ENCODE measurements at regions of chr3 and their contacts with region 1.

Region 1: GRCh38 chr3:98817547-98818041 is 54.5 kb downstream of the ST3GAL6 start:
- DNase-seq: peak in 1 of 2 experiments; percentile 64
- H3K4me3 ChIP-seq: no peak overlapping the region
- H3K27ac ChIP-seq: peak overlapping the region; percentile 2; the same call in 1 of the 2 replicates
- H3K4me1 ChIP-seq: peaks cover 24% of the 10 kb centered on the region
- H3K27me3 ChIP-seq: no peaks in the 10 kb centered on the region
- CTCF ChIP-seq: peak; percentile 95

Region 2: DNA sequence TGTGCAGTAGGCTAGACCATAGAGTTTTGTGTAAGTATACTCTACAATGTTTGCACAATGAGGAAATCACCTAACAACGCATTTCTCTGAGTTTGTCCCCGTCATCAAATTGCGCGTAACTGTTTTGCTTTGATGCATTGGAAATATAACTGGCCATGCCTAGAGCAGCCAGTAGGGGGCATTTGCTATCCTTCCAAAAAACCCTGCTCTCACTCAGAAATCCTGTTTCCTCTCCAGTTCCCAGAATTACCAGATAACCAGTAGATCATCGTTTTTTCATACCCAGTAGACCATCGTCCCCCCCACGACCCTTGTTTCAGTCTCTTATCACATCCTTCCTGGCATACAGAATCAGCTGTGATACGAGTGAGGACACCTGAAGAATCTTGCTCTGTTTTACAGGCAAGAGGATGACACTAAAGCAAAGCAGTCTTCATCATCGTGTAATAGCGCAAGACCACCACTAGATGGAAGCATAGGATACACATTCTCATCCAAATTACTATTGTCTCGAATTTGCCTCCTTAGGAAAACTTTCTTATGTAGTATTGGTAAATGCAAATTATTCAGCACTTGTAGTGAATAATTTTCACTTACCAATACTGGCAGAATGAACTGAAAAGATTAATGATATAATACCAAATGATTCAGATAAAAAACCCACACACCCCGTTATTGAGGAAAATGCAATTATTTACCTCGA is 778.1 kb before region 1 on chr3:
- CTCF ChIA-PET with region 1: no interaction called
- POLR2A ChIA-PET with region 1: no interaction called
- intact Hi-C with region 1: loop called (anchors 1 kb)
- DNase-seq: peak; percentile 74 to 81
- H3K4me3 ChIP-seq: peak overlapping the region; percentile 50; the same call in 1 of the 2 replicates
- H3K27ac ChIP-seq: no peak overlapping the region
- H3K4me1 ChIP-seq: peaks cover 9% of the 10 kb centered on the region; the same call in 1 of the 2 replicates
- H3K27me3 ChIP-seq: no peaks in the 10 kb centered on the region
- CTCF ChIP-seq: peak; percentile 100

Region 3: GRCh38 chr3:98602078-98602678 is 215.4 kb before region 1 on chr3:
- CTCF ChIA-PET with region 1: interaction called, 10 read pairs
- POLR2A ChIA-PET with region 1: interaction called, 4 read pairs
- intact Hi-C with region 1: loop called (anchors 1 kb)
- DNase-seq: peak; percentile 29 to 61
- H3K4me3 ChIP-seq: no peak overlapping the region
- H3K27ac ChIP-seq: no peak overlapping the region
- H3K4me1 ChIP-seq: no peaks in the 10 kb centered on the region
- H3K27me3 ChIP-seq: no peaks in the 10 kb centered on the region
- CTCF ChIP-seq: peak; percentile 95

Region 4: GRCh38 chr3:98980915-98981596 is 163.5 kb after region 1 on chr3:
- CTCF ChIA-PET with region 1: interaction called, 5 read pairs
- POLR2A ChIA-PET with region 1: no interaction called
- intact Hi-C with region 1: loop called (anchors 2 kb)
- DNase-seq: no peak
- H3K4me3 ChIP-seq: no peak overlapping the region
- H3K27ac ChIP-seq: 0 out of 2 replicates have a peak overlapping the region, but pooled peaks have one; percentile 7
- H3K4me1 ChIP-seq: peaks cover 29% of the 10 kb centered on the region
- H3K27me3 ChIP-seq: no peaks in the 10 kb centered on the region
- CTCF ChIP-seq: no peak

Region 5: GRCh38 chr3:99172736-99173657 is 355.4 kb after region 1 on chr3:
- CTCF ChIA-PET with region 1: no interaction called
- POLR2A ChIA-PET with region 1: no interaction called
- intact Hi-C with region 1: loop called (anchors 1 kb)
- DNase-seq: peak; percentile 58 to 59
- H3K4me3 ChIP-seq: no peak overlapping the region
- H3K27ac ChIP-seq: no peak overlapping the region
- H3K4me1 ChIP-seq: no peaks in the 10 kb centered on the region
- H3K27me3 ChIP-seq: no peaks in the 10 kb centered on the region
- CTCF ChIP-seq: peak; percentile 97

Measured in PC-9 (cell line).